CD8-positive, alpha-beta memory T cell (primary cell): ENCODE measurements at regions of chr15 and their contacts with region 1.

Region 1: GRCh38 chr15:59492389-59493377 is 54.7 kb downstream of the FAM81A start:
- DNase-seq: peak; percentile 32 to 70 (median 46)
- H3K4me3 ChIP-seq: no peak overlapping the region
- H3K4me3 Mint-ChIP-seq: no peak overlapping the region
- H3K27ac ChIP-seq: no peak overlapping the region
- H3K27ac Mint-ChIP-seq: peak overlapping the region in 1 of 8 donors; percentile 31
- H3K4me1 ChIP-seq: no peaks in the 10 kb centered on the region
- H3K4me1 Mint-ChIP-seq: peaks cover 2 to 6% (median 4%) of the 10 kb centered on the region in 3 donors
- H3K27me3 ChIP-seq: no peaks in the 10 kb centered on the region
- H3K27me3 Mint-ChIP-seq: peaks cover 0 to 4% of the 10 kb centered on the region in 2 donors

Region 2: DNA sequence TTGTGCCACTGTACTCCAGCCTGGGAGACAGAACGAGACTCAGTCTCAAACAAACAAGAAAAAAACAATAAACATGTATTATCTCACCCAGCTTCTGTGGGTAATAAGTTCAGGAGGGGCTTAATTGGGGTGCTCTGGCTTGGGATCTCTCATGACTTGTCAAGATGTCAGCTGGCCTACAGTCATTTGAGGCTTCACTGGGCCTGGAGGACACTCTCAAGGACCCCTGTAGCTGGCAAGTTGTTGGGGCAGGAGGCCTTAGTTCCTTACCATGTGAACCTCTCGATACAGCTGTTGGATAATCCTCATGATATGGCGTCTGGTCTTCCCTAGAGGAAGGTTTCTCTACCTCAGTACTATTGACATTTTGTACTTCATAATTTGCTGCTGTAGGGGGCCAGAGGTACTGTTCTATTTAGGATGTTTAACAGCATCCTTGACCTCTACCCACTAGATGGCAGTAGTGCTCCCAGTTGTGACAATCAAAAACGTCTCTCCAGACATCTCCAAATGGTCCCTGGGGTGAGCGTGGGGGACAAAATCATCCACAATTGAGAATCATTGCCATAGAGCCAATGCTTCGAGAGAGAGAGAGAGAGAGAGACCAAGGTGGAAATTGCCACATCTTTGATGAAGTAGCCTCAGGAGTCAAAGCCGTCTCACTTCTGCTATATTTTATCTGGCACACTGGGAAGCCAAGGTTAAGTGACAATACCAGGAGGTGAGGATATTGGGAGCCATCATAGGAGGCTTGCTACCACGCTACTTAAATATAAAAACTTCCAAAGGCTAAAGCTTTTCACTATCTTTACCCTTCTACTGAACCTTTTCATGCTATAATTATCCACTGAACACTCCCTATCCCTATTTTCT is 535.3 kb before region 1 on chr15:
- CTCF ChIA-PET with region 1: interaction called, 16 read pairs
- POLR2A ChIA-PET with region 1: no interaction called
- DNase-seq: peak; percentile 26 to 62 (median 50)
- H3K4me3 ChIP-seq: no peak overlapping the region
- H3K4me3 Mint-ChIP-seq: no peak overlapping the region
- H3K27ac ChIP-seq: no peak overlapping the region
- H3K27ac Mint-ChIP-seq: peak overlapping the region in 1 of 8 donors; percentile 58
- H3K4me1 ChIP-seq: no peaks in the 10 kb centered on the region
- H3K4me1 Mint-ChIP-seq: peaks cover 1 to 9% (median 4%) of the 10 kb centered on the region in 3 donors
- H3K27me3 ChIP-seq: no peaks in the 10 kb centered on the region
- H3K27me3 Mint-ChIP-seq: peaks cover 0 to 4% of the 10 kb centered on the region in 2 donors

Region 3: DNA sequence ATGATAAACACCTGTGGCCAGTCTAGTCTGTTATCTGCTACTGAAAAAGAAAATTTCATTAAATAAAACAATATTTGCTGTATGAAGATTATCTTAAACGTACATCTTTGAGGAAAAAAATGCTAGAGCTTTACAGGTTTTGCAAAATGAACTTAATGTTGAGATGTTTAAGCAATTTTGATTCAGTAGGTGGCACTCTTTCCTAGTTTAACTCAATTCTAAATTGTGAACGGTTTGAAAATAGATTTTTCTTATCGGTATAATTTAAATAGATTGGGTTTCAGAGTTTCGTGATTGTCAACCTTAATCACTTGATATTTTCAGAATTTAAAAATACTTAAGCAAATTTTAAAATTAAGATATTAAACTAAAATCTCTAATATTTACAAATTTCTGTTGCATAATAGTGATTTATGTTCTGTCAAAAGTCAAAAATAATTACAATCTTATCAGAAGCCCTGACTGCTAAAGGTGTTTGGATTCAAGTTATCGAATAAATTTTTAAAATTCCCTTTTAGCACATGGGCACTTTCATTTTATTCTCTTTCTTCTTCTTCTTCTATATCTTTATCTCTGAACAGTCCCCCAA is 512.2 kb before region 1 on chr15:
- CTCF ChIA-PET with region 1: interaction called, 23 read pairs
- POLR2A ChIA-PET with region 1: no interaction called
- DNase-seq: peak in 2 of 5 donors; percentile 31 to 37
- H3K4me3 ChIP-seq: no peak overlapping the region
- H3K4me3 Mint-ChIP-seq: peak overlapping the region in 3 of 7 donors; percentile 9 to 65 (median 62)
- H3K27ac ChIP-seq: no peak overlapping the region
- H3K27ac Mint-ChIP-seq: peak overlapping the region in 3 of 8 donors; percentile 50 to 85 (median 64)
- H3K4me1 ChIP-seq: peaks cover 26% of the 10 kb centered on the region
- H3K4me1 Mint-ChIP-seq: peaks cover 24 to 37% (median 34%) of the 10 kb centered on the region in 3 donors
- H3K27me3 ChIP-seq: no peaks in the 10 kb centered on the region
- H3K27me3 Mint-ChIP-seq: no peaks in the 10 kb centered on the region